ENCODE measurements at regions of chr9 and their contacts with region 1.

Region 1: DNA sequence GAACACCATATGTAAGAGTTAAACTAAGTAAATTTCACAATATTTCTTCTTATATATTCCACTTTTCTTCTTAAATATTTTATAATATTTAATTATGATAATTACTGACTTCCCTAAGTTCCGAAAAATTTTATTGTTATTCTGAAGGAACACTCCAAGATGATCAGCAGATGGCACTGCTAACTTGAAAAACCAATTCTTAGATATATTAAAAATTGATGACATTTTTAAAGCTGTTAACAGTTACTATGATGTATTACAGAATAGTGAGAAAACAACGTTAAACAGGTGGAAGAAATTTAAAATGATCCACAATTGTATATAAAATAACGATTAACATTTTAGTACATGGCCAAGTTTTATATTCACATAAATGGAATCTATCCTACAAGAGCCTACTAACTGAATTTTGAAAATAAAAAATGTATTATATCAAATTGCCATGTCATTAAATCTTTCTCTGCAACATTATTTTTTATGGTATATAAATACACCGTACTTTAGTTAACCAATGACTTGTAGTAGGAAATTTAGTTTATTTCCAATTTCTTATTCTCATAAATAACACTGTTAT is 30.1 kb upstream of the MUSK start:
- DNase-seq: no peak
- H3K4me3 ChIP-seq: no peak overlapping the region
- H3K27me3 ChIP-seq: no peaks in the 10 kb centered on the region
- CTCF ChIP-seq: peak; percentile 22; the same call in 1 of the 2 replicates

Region 2: DNA sequence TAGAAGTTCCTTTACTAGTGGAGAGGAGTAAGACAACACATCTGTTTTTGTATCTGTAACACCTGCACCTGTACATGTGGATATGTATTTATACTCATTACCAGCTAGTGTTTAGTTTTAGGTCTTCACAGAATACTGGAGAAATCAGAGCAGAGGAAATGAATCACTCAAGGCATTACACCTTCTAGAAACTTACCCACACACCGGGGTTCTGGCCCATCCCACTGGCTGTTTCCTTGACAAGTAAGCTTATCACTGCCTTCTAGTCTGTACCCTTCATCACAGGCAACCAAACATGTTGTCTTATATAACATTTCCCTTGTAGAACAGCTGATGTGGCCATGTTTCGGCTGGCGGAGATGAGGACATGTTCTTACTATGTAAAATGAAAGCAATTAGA is 135.6 kb before region 1 on chr9:
- CTCF ChIA-PET with region 1: no interaction called
- POLR2A ChIA-PET with region 1: no interaction called
- DNase-seq: no peak
- H3K4me3 ChIP-seq: no peak overlapping the region
- H3K27me3 ChIP-seq: no peaks in the 10 kb centered on the region
- CTCF ChIP-seq: no peak

Region 3: GRCh38 chr9:111030492-111030891 is 392.0 kb after region 1 on chr9:
- CTCF ChIA-PET with region 1: no interaction called
- POLR2A ChIA-PET with region 1: interaction called, 11 read pairs
- DNase-seq: no peak
- H3K4me3 ChIP-seq: no peak overlapping the region
- H3K27me3 ChIP-seq: no peaks in the 10 kb centered on the region
- CTCF ChIP-seq: no peak

Region 4: GRCh38 chr9:111271481-111272080 is 633.1 kb after region 1 on chr9:
- CTCF ChIA-PET with region 1: no interaction called
- POLR2A ChIA-PET with region 1: interaction called, 13 read pairs
- DNase-seq: no peak
- H3K4me3 ChIP-seq: no peak overlapping the region
- H3K27me3 ChIP-seq: no peaks in the 10 kb centered on the region
- CTCF ChIP-seq: no peak

Region 5: GRCh38 chr9:111298731-111299598 is 660.5 kb after region 1 on chr9:
- CTCF ChIA-PET with region 1: interaction called, 10 read pairs
- POLR2A ChIA-PET with region 1: no interaction called
- DNase-seq: peak; percentile 35
- H3K4me3 ChIP-seq: no peak overlapping the region
- H3K27me3 ChIP-seq: no peaks in the 10 kb centered on the region
- CTCF ChIP-seq: peak; percentile 50